ENCODE measurements at regions of chr12 and their contacts with region 1.

Region 1: GRCh38 chr12:25250744-25251730 is at the start of gene KRAS:
- DNase-seq: peak; percentile 90 to 93 (median 91)
- H3K4me3 ChIP-seq: peak within 1 kb of the TSS; percentile 67 to 90
- H3K4me3 Mint-ChIP-seq: peak within 1 kb of the TSS; percentile 92 to 96 (median 94)
- H3K27ac ChIP-seq: peak within 1 kb of the TSS; percentile 68
- H3K27ac Mint-ChIP-seq: peak within 1 kb of the TSS; percentile 91 to 98 (median 95)
- H3K4me1 ChIP-seq: peaks cover 33% of the 10 kb centered on the region
- H3K4me1 Mint-ChIP-seq: peaks cover 13 to 56% (median 40%) of the 10 kb centered on the region in 4 donors
- H3K27me3 ChIP-seq: no peaks in the 10 kb centered on the region
- H3K27me3 Mint-ChIP-seq: no peaks in the 10 kb centered on the region
- total RNA-seq, gene KRAS: 34.4 to 34.8 TPM

Region 2: DNA sequence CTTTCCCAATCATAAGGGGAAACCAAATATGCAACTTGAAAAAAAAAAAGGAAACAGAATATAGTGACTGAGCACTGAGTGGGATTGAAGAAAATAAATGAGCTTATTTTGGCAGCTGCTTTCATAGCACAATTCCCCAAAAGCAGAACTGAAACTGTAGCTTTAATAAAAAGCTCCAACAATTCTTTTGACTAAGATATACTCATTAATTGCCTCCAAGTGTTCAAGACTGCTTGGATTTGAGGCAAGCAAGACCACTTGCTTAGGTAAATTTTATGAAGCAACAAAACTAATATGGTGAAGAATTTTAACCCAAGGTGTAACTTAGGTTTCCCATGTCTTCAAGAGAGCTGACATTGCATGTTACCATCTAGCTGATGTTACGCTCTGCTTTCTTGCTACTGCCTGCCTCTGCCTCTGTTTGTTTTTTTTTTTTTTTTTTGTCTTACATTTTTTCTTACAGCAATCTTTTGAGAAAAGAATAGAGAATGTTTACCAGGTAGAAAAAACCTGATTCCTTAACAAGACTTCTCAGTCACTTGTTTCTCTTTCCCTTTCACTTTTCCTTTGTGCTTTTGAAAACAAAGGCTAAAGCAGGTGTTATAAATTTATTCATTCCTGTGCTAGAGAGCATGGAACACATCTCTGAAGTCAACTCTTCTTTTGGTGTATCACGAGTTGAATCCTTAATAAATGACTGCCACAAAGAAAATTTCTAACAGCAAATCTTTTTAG is 436.5 kb before region 1 on chr12:
- CTCF ChIA-PET with region 1: no interaction called
- POLR2A ChIA-PET with region 1: no interaction called
- intact Hi-C with region 1: no loop called
- DNase-seq: no peak
- H3K4me3 ChIP-seq: peak overlapping the region; percentile 15 to 36
- H3K4me3 Mint-ChIP-seq: peak overlapping the region; percentile 79 to 89 (median 84)
- H3K27ac ChIP-seq: no peak overlapping the region
- H3K27ac Mint-ChIP-seq: peak overlapping the region; percentile 20 to 88 (median 86)
- H3K4me1 ChIP-seq: peaks cover 16% of the 10 kb centered on the region
- H3K4me1 Mint-ChIP-seq: peaks cover 16 to 29% (median 21%) of the 10 kb centered on the region in 4 donors
- H3K27me3 ChIP-seq: no peaks in the 10 kb centered on the region
- H3K27me3 Mint-ChIP-seq: no peaks in the 10 kb centered on the region

Region 3: DNA sequence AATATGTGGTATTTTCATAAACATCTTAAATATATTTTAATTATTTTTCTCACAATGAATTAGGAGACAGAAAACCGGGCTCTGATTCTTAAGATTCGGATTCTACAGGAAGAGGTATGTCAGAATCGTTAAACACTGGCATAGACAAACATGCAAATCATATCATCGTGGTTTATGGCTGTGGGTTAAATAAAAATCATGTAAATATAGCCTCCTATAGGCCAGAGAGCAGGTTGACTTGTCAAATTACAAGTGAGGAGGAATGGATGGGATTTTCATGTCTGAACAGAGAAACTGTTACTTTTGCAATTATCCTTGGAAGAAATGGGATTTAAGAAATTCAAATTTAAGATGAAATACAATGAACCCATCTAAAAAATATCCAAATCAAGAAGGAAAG is 227.2 kb before region 1 on chr12:
- CTCF ChIA-PET with region 1: no interaction called
- POLR2A ChIA-PET with region 1: no interaction called
- intact Hi-C with region 1: no loop called
- DNase-seq: no peak
- H3K4me3 ChIP-seq: no peak overlapping the region
- H3K4me3 Mint-ChIP-seq: no peak overlapping the region
- H3K27ac ChIP-seq: no peak overlapping the region
- H3K27ac Mint-ChIP-seq: no peak overlapping the region
- H3K4me1 ChIP-seq: no peaks in the 10 kb centered on the region
- H3K4me1 Mint-ChIP-seq: no peaks in the 10 kb centered on the region
- H3K27me3 ChIP-seq: no peaks in the 10 kb centered on the region
- H3K27me3 Mint-ChIP-seq: peaks cover 5 to 7% of the 10 kb centered on the region in 2 donors

Region 4: GRCh38 chr12:25195056-25195971 is 55.7 kb before region 1 on chr12 and contains the starts of genes DNAI7 and ETFRF1:
- CTCF ChIA-PET with region 1: no interaction called
- POLR2A ChIA-PET with region 1: interaction called, 21 read pairs
- intact Hi-C with region 1: loop called (anchors 1 kb)
- DNase-seq: peak; percentile 93 to 97 (median 95)
- H3K4me3 ChIP-seq: peak within 1 kb of the TSS; percentile 73 to 98
- H3K4me3 Mint-ChIP-seq: peak within 1 kb of the TSS; percentile 96 to 99 (median 99)
- H3K27ac ChIP-seq: peak within 1 kb of the TSS; percentile 83
- H3K27ac Mint-ChIP-seq: peak within 1 kb of the TSS; percentile 97 to 100 (median 99)
- H3K4me1 ChIP-seq: peaks cover 24% of the 10 kb centered on the region
- H3K4me1 Mint-ChIP-seq: peaks cover 16 to 35% (median 25%) of the 10 kb centered on the region in 4 donors
- H3K27me3 ChIP-seq: no peaks in the 10 kb centered on the region
- H3K27me3 Mint-ChIP-seq: no peaks in the 10 kb centered on the region
- total RNA-seq, gene DNAI7: 0.15 TPM in 1 of 2 experiments, not detected in the other
- total RNA-seq, gene ETFRF1: 22.1 to 23.0 TPM

Region 5: GRCh38 chr12:25276199-25276937 is 25.3 kb after region 1 on chr12:
- CTCF ChIA-PET with region 1: interaction called, 3 read pairs
- POLR2A ChIA-PET with region 1: interaction called, 6 read pairs
- intact Hi-C with region 1: loop called (anchors 2 kb)
- DNase-seq: no peak
- H3K4me3 ChIP-seq: no peak overlapping the region
- H3K4me3 Mint-ChIP-seq: no peak overlapping the region
- H3K27ac ChIP-seq: no peak overlapping the region
- H3K27ac Mint-ChIP-seq: peak overlapping the region in 2 of 7 donors; percentile 1 to 50
- H3K4me1 ChIP-seq: peaks cover 23% of the 10 kb centered on the region
- H3K4me1 Mint-ChIP-seq: peaks cover 20 to 26% (median 21%) of the 10 kb centered on the region in 4 donors
- H3K27me3 ChIP-seq: no peaks in the 10 kb centered on the region
- H3K27me3 Mint-ChIP-seq: no peaks in the 10 kb centered on the region

Region 6: GRCh38 chr12:25302521-25302920 is 51.5 kb after region 1 on chr12:
- CTCF ChIA-PET with region 1: no interaction called
- POLR2A ChIA-PET with region 1: no interaction called
- intact Hi-C with region 1: no loop called
- DNase-seq: no peak
- H3K4me3 ChIP-seq: no peak overlapping the region
- H3K4me3 Mint-ChIP-seq: no peak overlapping the region
- H3K27ac ChIP-seq: no peak overlapping the region
- H3K27ac Mint-ChIP-seq: no peak overlapping the region
- H3K4me1 ChIP-seq: no peaks in the 10 kb centered on the region
- H3K4me1 Mint-ChIP-seq: no peaks in the 10 kb centered on the region
- H3K27me3 ChIP-seq: no peaks in the 10 kb centered on the region
- H3K27me3 Mint-ChIP-seq: peaks cover 2 to 9% of the 10 kb centered on the region in 2 donors

Region 7: GRCh38 chr12:25320123-25321006 is 69.3 kb after region 1 on chr12:
- CTCF ChIA-PET with region 1: no interaction called
- POLR2A ChIA-PET with region 1: interaction called, 7 read pairs
- intact Hi-C with region 1: loop called (anchors 2 kb)
- DNase-seq: no peak
- H3K4me3 ChIP-seq: no peak overlapping the region
- H3K4me3 Mint-ChIP-seq: no peak overlapping the region
- H3K27ac ChIP-seq: no peak overlapping the region
- H3K27ac Mint-ChIP-seq: peak overlapping the region in 1 of 7 donors; percentile 6
- H3K4me1 ChIP-seq: peaks cover 30% of the 10 kb centered on the region
- H3K4me1 Mint-ChIP-seq: peaks cover 33 to 44% (median 37%) of the 10 kb centered on the region in 4 donors
- H3K27me3 ChIP-seq: no peaks in the 10 kb centered on the region
- H3K27me3 Mint-ChIP-seq: no peaks in the 10 kb centered on the region

Region 8: GRCh38 chr12:25328072-25328712 is 77.2 kb after region 1 on chr12:
- CTCF ChIA-PET with region 1: no interaction called
- POLR2A ChIA-PET with region 1: interaction called, 13 read pairs
- intact Hi-C with region 1: loop called (anchors 2 kb)
- DNase-seq: no peak
- H3K4me3 ChIP-seq: no peak overlapping the region
- H3K4me3 Mint-ChIP-seq: no peak overlapping the region
- H3K27ac ChIP-seq: no peak overlapping the region
- H3K27ac Mint-ChIP-seq: no peak overlapping the region
- H3K4me1 ChIP-seq: peaks cover 15% of the 10 kb centered on the region
- H3K4me1 Mint-ChIP-seq: peaks cover 9 to 16% (median 11%) of the 10 kb centered on the region in 4 donors
- H3K27me3 ChIP-seq: no peaks in the 10 kb centered on the region
- H3K27me3 Mint-ChIP-seq: no peaks in the 10 kb centered on the region

Region 9: GRCh38 chr12:25377469-25378177 is 126.6 kb after region 1 on chr12:
- CTCF ChIA-PET with region 1: interaction called, 3 read pairs
- POLR2A ChIA-PET with region 1: interaction called, 35 read pairs
- intact Hi-C with region 1: no loop called
- DNase-seq: peak in 4 of 5 donors; percentile 27 to 54 (median 46)
- H3K4me3 ChIP-seq: no peak overlapping the region
- H3K4me3 Mint-ChIP-seq: peak overlapping the region in 7 of 8 donors; percentile 10 to 67 (median 37)
- H3K27ac ChIP-seq: no peak overlapping the region
- H3K27ac Mint-ChIP-seq: peak overlapping the region; percentile 54 to 93 (median 84)
- H3K4me1 ChIP-seq: peaks cover 29% of the 10 kb centered on the region
- H3K4me1 Mint-ChIP-seq: peaks cover 20 to 35% (median 28%) of the 10 kb centered on the region in 4 donors
- H3K27me3 ChIP-seq: no peaks in the 10 kb centered on the region
- H3K27me3 Mint-ChIP-seq: no peaks in the 10 kb centered on the region

Measured in CD4-positive, alpha-beta memory T cell (primary cell).